ENCODE measurements at regions of chr1 and their contacts with region 1.

Region 1: DNA sequence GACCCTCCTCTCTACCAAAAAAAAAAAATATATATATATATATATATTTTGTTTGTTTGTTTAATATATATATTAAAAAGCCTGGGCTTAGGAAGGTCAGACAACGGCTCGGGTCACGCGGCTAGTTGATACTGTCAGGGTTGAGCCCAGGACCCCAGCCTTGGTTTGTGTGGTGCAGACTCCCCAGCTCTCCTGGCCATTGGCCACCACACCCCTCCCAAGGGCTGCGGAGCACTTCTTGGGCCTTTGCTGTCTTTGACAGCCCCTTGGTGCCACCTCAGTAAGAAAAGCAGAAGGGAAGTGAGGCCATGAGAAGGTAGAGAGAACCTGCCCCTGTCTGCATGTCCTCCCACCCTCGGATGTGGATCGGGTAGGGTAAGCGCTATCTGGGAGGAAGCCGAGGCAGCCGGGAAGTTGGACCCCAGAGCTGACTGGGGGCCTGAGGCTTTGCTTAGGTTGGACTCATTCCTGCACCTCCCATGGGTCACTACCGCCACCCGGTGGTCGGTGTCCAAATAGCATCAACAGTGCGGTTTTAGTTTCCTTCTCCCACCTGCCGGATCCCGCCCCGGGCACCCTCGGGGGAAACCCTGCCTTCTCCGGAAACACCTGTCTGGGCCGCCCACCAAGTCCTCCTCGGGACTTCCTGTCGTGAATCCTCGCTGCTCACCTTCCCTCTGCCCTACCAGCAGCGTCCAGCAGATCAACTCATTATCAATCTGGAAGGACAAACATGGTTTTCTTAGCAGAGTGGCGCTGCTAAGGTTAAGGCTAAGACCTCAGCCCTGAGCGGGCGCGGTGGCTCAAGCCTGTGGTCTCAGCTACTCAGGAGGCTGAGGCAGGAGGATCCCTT is 29.8 kb upstream of the GNPAT start:
- DNase-seq: peak; percentile 69 to 87 (median 82)
- H3K4me3 ChIP-seq: peak overlapping the region; percentile 15 to 73 (median 53)
- H3K27ac ChIP-seq: peak overlapping the region in 2 of 59 donors; percentile 53 to 58
- H3K27me3 ChIP-seq: peaks cover 0 to 2% (median 0%) of the 10 kb centered on the region in 45 donors
- CTCF ChIP-seq: peak; percentile 82 to 99 (median 95)

Region 2: GRCh38 chr1:230797942-230798418 is 413.3 kb before region 1 on chr1:
- intact Hi-C with region 1: loop called (anchors 2 kb)
- DNase-seq: peak; percentile 48 to 78 (median 74)
- H3K4me3 ChIP-seq: peak overlapping the region in 4 of 59 donors; percentile 2 to 46 (median 10)
- H3K27ac ChIP-seq: peak overlapping the region in 56 of 59 donors; percentile 16 to 92 (median 82)
- H3K27me3 ChIP-seq: no peaks in the 10 kb centered on the region
- CTCF ChIP-seq: peak; percentile 25 to 95 (median 87)

Region 3: GRCh38 chr1:230917284-230918135 is 293.7 kb before region 1 on chr1:
- intact Hi-C with region 1: loop called (anchors 5 to 10 kb)
- DNase-seq: peak; percentile 66 to 92 (median 73)
- H3K4me3 ChIP-seq: peak overlapping the region in 1 of 59 donors; percentile 11
- H3K27ac ChIP-seq: peak overlapping the region in 55 of 59 donors; percentile 2 to 85 (median 70)
- H3K27me3 ChIP-seq: no peaks in the 10 kb centered on the region
- CTCF ChIP-seq: peak; percentile 35 to 86 (median 62)

Region 4: GRCh38 chr1:230922620-230923019 is 288.6 kb before region 1 on chr1:
- intact Hi-C with region 1: loop called (anchors 5 to 10 kb)
- DNase-seq: no peak
- H3K4me3 ChIP-seq: no peak overlapping the region
- H3K27ac ChIP-seq: no peak overlapping the region
- H3K27me3 ChIP-seq: no peaks in the 10 kb centered on the region
- CTCF ChIP-seq: no peak

Region 5: DNA sequence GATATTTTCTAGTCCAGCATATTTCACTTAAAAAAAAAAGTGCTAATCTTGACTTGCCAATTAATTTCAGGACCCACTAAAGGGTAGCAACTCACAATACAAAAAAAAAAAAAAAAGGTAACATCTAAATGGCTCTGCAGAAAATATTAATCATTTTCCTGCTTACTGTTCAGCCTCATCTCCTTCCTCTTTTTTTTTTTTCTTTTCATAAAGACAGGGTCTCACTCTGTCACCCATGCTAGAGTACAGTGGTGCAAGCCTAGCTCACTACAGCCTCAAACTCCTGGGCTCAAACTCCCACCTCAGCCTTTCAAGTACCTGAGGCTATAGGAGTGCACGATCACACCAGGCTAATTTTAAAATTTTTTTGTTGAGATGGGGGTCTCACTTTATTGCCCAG is 262.9 kb before region 1 on chr1:
- intact Hi-C with region 1: no loop called
- DNase-seq: no peak
- H3K4me3 ChIP-seq: no peak overlapping the region
- H3K27ac ChIP-seq: no peak overlapping the region
- H3K27me3 ChIP-seq: no peaks in the 10 kb centered on the region
- CTCF ChIP-seq: no peak

Region 6: GRCh38 chr1:231091831-231092301 is 119.4 kb before region 1 on chr1:
- intact Hi-C with region 1: loop called (anchors 1 to 5 kb)
- DNase-seq: no peak
- H3K4me3 ChIP-seq: no peak overlapping the region
- H3K27ac ChIP-seq: no peak overlapping the region
- H3K27me3 ChIP-seq: peaks cover 0 to 4% (median 0%) of the 10 kb centered on the region in 45 donors
- CTCF ChIP-seq: peak in 40 of 56 donors; percentile 13 to 51 (median 28)

Measured in dorsolateral prefrontal cortex (tissue), 120 donors.